Spleen (tissue), 13 donors: ENCODE measurements at regions of chr1 and their contacts with region 1.

Region 1: DNA sequence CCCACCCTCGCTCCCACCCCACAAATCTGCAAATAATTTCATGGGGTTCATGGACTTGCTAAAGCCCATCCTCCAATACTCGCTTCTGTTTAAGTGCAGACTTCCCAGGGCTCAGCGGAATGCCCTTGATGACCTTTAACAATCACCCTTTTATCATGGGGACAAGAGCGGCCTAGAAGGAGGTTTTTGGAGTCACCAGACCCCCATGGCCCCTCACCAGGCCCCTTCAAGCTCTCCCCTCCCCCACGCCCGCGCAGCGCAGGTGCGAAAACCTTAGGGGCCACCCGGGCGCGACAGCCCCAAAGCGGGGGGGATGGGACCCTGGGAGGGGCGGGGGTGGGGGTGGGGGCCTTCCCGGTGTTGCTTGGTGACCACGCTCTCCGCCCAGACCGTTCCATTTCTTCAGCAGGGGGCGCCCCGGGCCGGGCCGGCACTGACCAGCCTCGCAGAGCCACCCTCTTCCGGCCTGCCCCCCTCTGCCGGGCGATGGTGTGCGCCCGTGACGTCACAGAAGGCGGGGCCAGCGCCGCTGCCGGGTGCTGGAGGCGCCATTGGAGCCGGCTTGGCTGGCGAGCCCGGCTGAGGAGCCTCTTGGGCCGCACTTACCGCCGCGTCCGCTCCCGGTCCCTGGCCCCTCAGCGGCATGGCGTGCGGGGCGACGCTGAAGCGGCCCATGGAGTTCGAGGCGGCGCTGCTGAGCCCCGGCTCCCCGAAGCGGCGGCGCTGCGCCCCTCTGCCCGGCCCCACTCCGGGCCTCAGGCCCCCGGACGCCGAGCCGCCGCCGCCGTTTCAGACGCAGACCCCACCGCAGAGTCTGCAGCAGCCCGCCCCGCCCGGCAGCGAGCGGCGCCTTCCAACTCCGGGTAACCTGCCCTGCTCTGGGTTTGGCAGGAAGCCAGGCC is at the start of gene AKIRIN1:
- DNase-seq: peak; percentile 100
- H3K4me3 ChIP-seq: peak within 1 kb of the TSS; percentile 78 to 98 (median 96)
- H3K27ac ChIP-seq: peak within 1 kb of the TSS; percentile 92 to 98 (median 94)
- H3K4me1 ChIP-seq: peaks cover 16 to 54% (median 45%) of the 10 kb centered on the region in 6 donors
- H3K27me3 ChIP-seq: no peaks in the 10 kb centered on the region
- CTCF ChIP-seq: peak in 6 of 11 experiments; percentile 27 to 62 (median 42)
- POLR2A ChIP-seq: peak; percentile 86 to 91 (median 90)
- total RNA-seq, gene AKIRIN1: 40.0 to 57.2 (median 45.6) TPM

Region 2: DNA sequence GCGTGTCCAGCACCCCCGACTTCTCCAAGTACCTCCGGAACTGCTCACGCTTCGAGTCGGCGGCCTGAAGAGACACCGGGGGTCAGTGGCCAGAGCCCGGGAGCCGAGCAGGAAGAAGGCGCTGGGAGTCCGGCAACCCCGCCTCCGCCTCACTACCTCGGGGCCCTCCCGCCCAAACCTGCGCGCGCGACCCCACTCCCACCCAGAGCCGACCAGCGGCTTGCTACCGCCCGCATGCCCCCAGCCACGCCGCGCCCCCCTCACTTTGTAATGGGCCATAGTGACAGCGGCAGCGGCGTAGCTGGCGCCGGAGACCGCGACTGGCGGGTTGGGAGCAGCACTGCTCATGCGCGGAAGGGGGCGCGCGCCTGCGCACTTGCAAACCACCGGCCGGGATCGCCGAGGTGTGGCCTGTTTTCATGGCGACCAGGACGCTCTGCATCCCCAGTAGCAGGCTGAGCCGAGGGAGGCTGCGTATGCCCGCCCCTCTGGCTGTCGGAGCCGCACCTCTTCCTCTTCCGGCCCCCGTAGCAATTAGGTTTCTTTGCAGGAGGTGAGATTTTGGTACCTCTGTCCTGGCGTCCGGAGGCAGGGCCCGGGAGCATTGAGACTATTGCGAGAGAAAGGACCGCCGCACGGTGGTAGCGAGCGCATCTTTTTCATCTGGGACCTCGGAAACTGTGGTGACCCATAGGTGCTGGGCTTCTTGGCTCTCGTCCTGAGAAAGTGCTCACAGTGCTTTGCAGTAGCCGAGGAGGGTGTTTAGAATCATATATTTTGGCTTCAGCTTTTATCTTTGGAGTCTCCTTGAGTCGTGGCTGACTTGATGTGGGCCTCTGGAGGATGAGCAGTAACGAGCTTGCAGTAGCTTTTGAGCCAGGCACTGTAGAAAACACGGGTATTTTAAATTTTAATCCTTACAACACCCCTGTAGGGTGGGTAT is 117.7 kb before region 1 on chr1 and contains the start of gene MYCBP:
- intact Hi-C with region 1: loop called (anchors 10 kb)
- DNase-seq: peak; percentile 99
- H3K4me3 ChIP-seq: peak within 1 kb of the TSS; percentile 85 to 99 (median 96)
- H3K27ac ChIP-seq: peak within 1 kb of the TSS; percentile 55 to 89 (median 82)
- H3K4me1 ChIP-seq: peaks cover 8 to 46% (median 24%) of the 10 kb centered on the region in 6 donors
- H3K27me3 ChIP-seq: no peaks in the 10 kb centered on the region
- CTCF ChIP-seq: peak in 9 of 11 experiments; percentile 6 to 55 (median 28)
- POLR2A ChIP-seq: peak in 2 of 3 donors; percentile 24 to 59
- total RNA-seq, gene MYCBP: 8.1 to 20.9 (median 14.9) TPM